ENCODE measurements at regions of chr2 and their contacts with region 1.

Region 1: DNA sequence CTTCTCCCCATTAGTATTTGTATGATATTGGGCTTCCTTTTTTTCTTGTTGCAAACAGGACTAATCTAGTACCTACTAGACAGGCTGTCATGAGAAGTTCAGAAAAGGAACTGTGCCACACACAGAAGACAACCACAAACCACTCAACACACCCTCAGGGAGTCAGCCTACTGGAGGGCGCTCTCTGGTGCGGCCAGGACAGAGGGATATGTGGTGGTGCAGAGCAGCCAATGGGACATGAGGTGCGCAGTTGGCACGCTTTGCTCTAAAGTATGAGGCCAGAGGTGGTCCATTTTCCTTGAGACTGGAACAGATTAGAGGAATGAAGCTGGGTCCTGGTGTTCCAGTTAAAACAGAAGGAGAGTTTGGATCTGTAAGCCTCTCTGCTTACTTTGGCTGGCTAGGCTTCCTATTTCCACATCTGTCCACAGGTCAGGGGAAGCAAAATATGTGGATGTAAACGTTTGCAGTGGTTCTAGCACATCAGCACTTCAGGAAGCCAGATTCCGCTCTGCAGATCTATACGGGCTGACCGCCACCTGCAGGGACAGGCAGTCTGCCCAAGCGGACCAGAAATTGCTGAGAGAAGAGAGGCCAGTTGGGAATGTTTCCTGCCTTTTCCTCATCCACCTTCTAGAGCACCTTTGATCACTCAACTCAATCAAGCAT is 114.1 kb downstream of the GFPT1 start:
- DNase-seq: no peak
- H3K4me3 ChIP-seq: no peak overlapping the region
- H3K27ac ChIP-seq: no peak overlapping the region
- H3K4me1 ChIP-seq: no peaks in the 10 kb centered on the region
- H3K27me3 ChIP-seq: no peaks in the 10 kb centered on the region
- CTCF ChIP-seq: no peak
- POLR2A ChIP-seq: no peak

Region 2: DNA sequence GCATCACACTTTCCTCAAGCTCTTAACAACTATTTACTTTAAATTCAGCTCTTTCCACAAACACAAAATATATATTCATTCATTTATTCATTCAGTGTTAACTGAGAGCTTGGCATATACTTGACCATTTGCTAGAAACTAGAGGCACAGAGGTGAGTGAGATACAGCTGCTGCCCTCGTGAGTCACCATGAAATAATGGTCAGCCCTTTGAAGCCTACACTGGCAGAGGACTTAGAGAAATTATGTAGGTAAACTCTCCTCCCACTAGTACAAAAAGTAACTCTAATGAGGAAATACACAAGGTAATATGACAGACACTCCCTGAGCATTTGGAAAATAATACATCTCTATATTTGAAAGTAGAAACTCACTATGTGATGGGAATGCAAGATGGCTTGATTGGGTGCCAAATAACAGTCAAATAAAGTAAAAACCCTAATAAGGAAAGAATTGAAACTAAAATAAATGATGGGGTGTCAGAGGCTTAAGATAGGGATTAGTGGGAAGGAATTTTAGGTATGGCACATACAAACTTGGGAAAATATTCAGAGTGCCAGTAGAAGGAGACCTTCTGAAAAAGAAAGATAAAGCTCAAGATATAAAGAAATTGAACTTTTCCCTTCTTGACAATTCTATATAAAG is 198.9 kb before region 1 on chr2:
- intact Hi-C with region 1: no loop called
- DNase-seq: no peak
- H3K4me3 ChIP-seq: no peak overlapping the region
- H3K27ac ChIP-seq: no peak overlapping the region
- H3K4me1 ChIP-seq: no peaks in the 10 kb centered on the region
- H3K27me3 ChIP-seq: no peaks in the 10 kb centered on the region
- CTCF ChIP-seq: no peak
- POLR2A ChIP-seq: no peak

Region 3: GRCh38 chr2:69291004-69291650 is 18.2 kb after region 1 on chr2:
- intact Hi-C with region 1: loop called (anchors 1 kb)
- DNase-seq: no peak
- H3K4me3 ChIP-seq: no peak overlapping the region
- H3K27ac ChIP-seq: peak overlapping the region; percentile 56 to 73
- H3K4me1 ChIP-seq: peaks cover 0 to 8% of the 10 kb centered on the region in 2 donors
- H3K27me3 ChIP-seq: no peaks in the 10 kb centered on the region
- CTCF ChIP-seq: no peak
- POLR2A ChIP-seq: no peak

Region 4: GRCh38 chr2:69509007-69509749 is 236.2 kb after region 1 on chr2:
- intact Hi-C with region 1: no loop called
- DNase-seq: peak in 1 of 2 donors; percentile 59
- H3K4me3 ChIP-seq: no peak overlapping the region
- H3K27ac ChIP-seq: no peak overlapping the region
- H3K4me1 ChIP-seq: no peaks in the 10 kb centered on the region
- H3K27me3 ChIP-seq: no peaks in the 10 kb centered on the region
- CTCF ChIP-seq: no peak
- POLR2A ChIP-seq: no peak